ENCODE measurements at regions of chr2 and their contacts with region 1.

Region 1: GRCh38 chr2:178414266-178415247 is 36.4 kb downstream of the PRKRA start:
- DNase-seq: peak; percentile 87
- H3K4me3 ChIP-seq: peak overlapping the region; percentile 63 to 69 (median 68)
- H3K27ac ChIP-seq: peak overlapping the region; percentile 73
- H3K4me1 ChIP-seq: peaks cover 24% of the 10 kb centered on the region
- H3K27me3 ChIP-seq: no peaks in the 10 kb centered on the region
- CTCF ChIP-seq: peak; percentile 87 to 96

Region 2: GRCh38 chr2:177983183-177983788 is 431.3 kb before region 1 on chr2:
- CTCF ChIA-PET with region 1: no interaction called
- dilution Hi-C with region 1: no loop called
- in situ Hi-C with region 1: no loop called
- intact Hi-C with region 1: loop called (anchors 5 kb)
- DNase-seq: peak; percentile 36
- H3K4me3 ChIP-seq: no peak overlapping the region
- H3K27ac ChIP-seq: no peak overlapping the region
- H3K4me1 ChIP-seq: no peaks in the 10 kb centered on the region
- H3K27me3 ChIP-seq: peaks cover 4% of the 10 kb centered on the region
- CTCF ChIP-seq: peak; percentile 95 to 96

Region 3: DNA sequence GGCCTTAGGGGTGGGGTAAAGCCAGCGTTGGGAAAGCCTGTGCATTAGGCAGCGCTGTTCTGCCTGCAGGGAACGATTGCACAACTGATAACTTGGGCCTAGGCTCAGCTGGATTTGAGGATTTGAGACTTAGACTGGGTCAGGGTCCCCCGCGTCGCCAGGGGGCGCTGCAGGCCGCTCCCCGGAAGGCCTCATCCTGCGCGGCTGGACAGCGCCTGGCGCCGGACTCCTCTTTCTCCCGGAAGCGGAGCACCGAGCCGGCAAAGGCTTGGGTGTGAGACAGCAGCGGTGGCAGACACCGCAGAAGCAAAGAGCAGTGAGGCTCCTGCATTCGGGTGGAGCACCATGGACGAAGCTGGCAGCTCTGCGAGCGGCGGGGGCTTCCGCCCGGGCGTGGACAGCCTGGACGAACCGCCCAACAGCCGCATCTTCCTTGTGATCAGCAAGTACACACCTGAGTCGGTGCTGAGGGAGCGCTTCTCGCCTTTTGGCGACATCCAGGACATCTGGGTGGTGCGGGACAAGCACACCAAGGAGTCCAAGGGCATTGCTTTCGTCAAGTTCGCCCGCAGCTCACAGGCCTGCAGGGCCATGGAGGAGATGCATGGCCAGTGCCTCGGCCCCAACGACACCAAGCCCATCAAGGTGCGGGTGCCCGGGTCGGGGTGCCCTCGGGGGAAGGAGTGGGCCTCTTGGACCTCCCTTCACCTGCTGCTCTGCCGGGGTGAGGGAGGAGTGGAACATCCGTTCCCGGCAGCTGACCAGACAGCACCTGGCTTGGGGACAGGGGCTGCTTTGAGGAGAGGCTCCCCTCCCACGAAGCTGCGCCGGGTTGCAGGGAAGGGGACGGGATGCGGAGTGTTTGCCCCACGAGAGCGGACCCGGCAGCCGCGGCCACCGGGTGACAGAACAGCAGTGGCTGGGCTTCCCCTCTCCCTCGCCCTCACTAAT is 302.1 kb before region 1 on chr2 and contains the start of gene RBM45:
- CTCF ChIA-PET with region 1: interaction called, 3 read pairs
- dilution Hi-C with region 1: loop called (anchors 25 kb)
- in situ Hi-C with region 1: loop called in 1 of 2 experiments (anchors 10 kb)
- intact Hi-C with region 1: loop called (anchors 1 kb)
- DNase-seq: peak; percentile 95
- H3K4me3 ChIP-seq: peak within 1 kb of the TSS; percentile 74 to 85 (median 75)
- H3K27ac ChIP-seq: peak within 1 kb of the TSS; percentile 22
- H3K4me1 ChIP-seq: peaks cover 17% of the 10 kb centered on the region
- H3K27me3 ChIP-seq: no peaks in the 10 kb centered on the region
- CTCF ChIP-seq: peak; percentile 94 to 100
- total RNA-seq, gene RBM45: 12.1 to 15.5 TPM

Region 4: DNA sequence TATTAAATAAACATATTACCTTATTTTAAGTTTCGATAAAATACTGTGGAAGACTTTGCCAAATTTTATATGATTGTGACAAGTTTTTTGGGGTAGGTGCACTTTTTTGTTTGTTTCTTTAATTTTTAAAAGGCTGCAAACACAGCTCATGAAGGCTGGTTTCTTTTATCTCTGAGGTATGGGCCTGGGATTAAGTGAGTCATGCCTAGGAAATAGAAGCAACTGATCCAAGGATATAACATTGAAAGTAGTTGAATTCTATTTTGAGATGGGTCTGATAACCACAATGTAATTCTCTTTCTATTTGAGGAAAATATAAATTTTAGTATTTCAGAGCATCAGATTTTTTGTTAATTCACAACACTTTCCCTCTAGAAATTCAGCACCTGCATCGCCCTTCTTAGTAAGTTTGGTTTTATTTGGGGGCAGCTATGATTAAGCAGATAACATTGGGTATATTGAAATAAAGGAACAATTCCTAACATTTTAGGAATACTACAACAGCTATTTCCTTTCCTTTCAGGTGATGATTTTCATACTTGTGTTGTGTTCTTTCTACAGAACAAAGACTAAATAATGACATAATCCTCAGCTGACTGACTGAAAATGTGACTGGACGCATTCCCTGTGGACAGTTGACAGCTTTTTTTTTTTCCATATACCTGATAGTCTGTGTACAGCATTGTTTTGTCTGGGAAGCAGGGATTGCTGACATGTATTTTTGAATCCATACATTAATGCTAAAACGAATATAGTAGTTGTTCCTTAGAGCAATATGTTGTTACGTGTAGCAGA is 285.5 kb before region 1 on chr2:
- CTCF ChIA-PET with region 1: interaction called, 14 read pairs
- dilution Hi-C with region 1: loop called (anchors 25 kb)
- in situ Hi-C with region 1: no loop called
- intact Hi-C with region 1: loop called (anchors 1 kb)
- DNase-seq: no peak
- H3K4me3 ChIP-seq: no peak overlapping the region
- H3K27ac ChIP-seq: no peak overlapping the region
- H3K4me1 ChIP-seq: no peaks in the 10 kb centered on the region
- H3K27me3 ChIP-seq: no peaks in the 10 kb centered on the region
- CTCF ChIP-seq: no peak

Region 5: GRCh38 chr2:178193823-178194599 is 220.5 kb before region 1 on chr2 and contains the start of gene OSBPL6:
- CTCF ChIA-PET with region 1: no interaction called
- dilution Hi-C with region 1: no loop called
- in situ Hi-C with region 1: no loop called
- intact Hi-C with region 1: loop called (anchors 1 kb)
- DNase-seq: peak; percentile 91
- H3K4me3 ChIP-seq: peak within 1 kb of the TSS; percentile 78 to 87 (median 79)
- H3K27ac ChIP-seq: peak within 1 kb of the TSS; percentile 68
- H3K4me1 ChIP-seq: peaks cover 26% of the 10 kb centered on the region
- H3K27me3 ChIP-seq: no peaks in the 10 kb centered on the region
- CTCF ChIP-seq: peak in 1 of 2 donors; percentile 11
- total RNA-seq, gene OSBPL6: 32.2 to 32.9 TPM

Region 6: DNA sequence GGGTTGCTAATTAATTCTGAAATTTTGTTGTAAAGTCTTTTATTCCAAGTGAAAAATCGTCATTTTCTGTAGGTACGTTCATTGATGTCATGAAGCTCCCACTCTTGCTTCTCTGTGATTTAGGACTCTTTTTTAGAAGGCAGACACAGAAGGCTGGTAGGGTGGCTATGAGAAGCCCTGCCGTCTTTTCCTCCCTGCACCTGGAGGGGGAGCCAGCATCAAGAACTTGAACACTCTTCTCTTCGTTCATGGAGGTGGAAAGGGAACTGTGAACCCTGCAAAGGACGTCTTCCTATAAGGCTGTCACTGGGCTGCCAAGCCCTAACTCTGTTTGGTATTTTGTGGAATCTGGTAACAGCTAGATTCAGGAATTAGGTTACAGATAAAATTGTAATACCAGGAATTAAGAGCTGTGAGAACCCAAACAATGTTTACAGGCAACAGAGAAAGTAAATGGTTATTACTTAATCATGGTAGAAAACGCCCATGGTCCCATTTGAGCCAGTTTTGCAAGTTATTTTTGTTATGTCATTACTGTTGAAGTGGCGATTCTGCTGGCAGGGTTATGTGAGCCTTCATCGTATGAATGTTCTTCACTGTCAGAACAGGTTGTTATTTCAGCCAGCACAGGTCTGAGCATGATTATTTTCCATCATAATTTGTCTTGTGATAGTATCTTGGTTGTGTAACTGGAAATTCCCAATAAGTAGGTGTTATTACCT is 108.0 kb before region 1 on chr2:
- CTCF ChIA-PET with region 1: no interaction called
- dilution Hi-C with region 1: no loop called
- in situ Hi-C with region 1: no loop called
- intact Hi-C with region 1: loop called (anchors 1 kb)
- DNase-seq: peak; percentile 35
- H3K4me3 ChIP-seq: no peak overlapping the region
- H3K27ac ChIP-seq: no peak overlapping the region
- H3K4me1 ChIP-seq: peaks cover 4% of the 10 kb centered on the region
- H3K27me3 ChIP-seq: no peaks in the 10 kb centered on the region
- CTCF ChIP-seq: peak; percentile 48 to 77

Region 7: DNA sequence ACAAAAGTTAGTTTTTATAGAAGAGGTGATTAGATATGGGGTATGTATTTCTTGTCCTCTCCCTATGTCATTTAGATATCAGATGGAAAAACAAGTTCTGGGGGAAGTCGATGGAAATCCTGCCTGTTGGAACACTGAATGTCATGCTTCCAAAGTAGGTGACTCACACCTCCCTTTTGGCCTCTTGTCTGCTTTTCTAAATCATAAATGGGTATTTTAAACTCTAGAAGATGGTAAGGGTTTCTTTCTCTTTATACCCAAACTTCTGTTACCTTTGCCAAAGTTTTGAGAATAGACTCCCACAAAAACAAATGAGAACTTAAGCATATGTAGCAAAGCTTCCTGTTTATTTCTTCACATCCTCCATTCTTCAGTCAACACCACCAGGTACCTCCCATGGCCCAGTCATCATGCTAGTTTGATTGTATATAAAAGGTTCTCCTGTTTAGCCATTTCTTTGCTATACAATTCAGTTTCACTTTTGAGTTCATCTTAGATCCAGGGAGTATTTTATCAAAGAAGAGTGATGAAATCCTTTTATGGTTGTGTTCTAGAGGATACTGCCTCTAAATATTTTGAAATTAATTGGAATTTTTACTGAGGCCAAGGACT is 27.5 kb before region 1 on chr2:
- CTCF ChIA-PET with region 1: no interaction called
- dilution Hi-C with region 1: no loop called
- in situ Hi-C with region 1: no loop called
- intact Hi-C with region 1: no loop called
- DNase-seq: no peak
- H3K4me3 ChIP-seq: no peak overlapping the region
- H3K27ac ChIP-seq: no peak overlapping the region
- H3K4me1 ChIP-seq: no peaks in the 10 kb centered on the region
- H3K27me3 ChIP-seq: no peaks in the 10 kb centered on the region
- CTCF ChIP-seq: no peak

Region 8: GRCh38 chr2:178397002-178397605 is 17.5 kb before region 1 on chr2:
- CTCF ChIA-PET with region 1: interaction called, 7 read pairs
- dilution Hi-C with region 1: no loop called
- in situ Hi-C with region 1: no loop called
- intact Hi-C with region 1: loop called (anchors 1 kb)
- DNase-seq: peak; percentile 24
- H3K4me3 ChIP-seq: no peak overlapping the region
- H3K27ac ChIP-seq: no peak overlapping the region
- H3K4me1 ChIP-seq: no peaks in the 10 kb centered on the region
- H3K27me3 ChIP-seq: no peaks in the 10 kb centered on the region
- CTCF ChIP-seq: peak; percentile 54 to 72

Region 9: DNA sequence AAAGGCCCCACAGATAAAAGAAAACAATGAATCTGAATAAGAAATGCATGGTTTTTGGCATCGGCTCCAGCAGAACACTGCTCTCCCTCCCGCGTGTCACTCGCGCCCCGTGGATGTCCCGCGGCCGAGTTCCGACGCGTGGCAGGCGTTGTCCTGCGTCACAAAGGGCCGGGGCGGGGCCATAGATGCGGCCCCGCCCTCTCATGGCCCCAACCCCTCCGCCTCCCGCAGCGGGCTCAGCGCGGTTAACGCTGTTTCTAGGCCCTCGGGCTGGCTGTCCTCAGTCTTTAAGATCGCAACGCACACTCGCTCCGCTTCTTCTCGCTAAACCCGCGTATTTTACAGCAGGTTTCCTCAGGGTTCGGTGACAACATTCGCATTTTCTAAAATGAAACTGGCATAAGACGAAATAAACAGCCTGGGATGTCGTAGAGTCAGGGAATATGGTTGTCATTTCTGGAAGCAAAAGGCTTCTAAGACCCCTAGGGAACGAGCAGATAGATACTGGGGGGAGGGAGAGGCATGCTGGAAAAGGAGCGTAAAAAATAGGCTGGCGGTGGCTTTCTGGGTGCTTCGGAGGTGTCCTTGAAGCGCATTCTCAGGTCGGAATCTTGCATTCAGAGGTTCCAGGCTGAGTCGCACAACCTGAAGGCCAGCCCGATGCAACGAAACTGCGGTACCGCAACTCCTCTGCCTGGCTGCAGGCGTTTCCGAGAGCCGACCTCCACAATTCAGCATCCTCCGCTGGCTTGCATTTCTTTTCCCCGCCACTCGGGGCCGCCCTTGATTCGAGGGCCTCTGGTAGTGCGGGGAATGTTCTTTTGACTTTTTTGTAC is 64.1 kb after region 1 on chr2 and contains the start of gene FKBP7:
- CTCF ChIA-PET with region 1: no interaction called
- dilution Hi-C with region 1: no loop called
- in situ Hi-C with region 1: no loop called
- intact Hi-C with region 1: no loop called
- DNase-seq: peak; percentile 72
- H3K4me3 ChIP-seq: peak within 1 kb of the TSS; percentile 73 to 95 (median 88)
- H3K27ac ChIP-seq: peak within 1 kb of the TSS; percentile 91
- H3K4me1 ChIP-seq: peaks cover 25% of the 10 kb centered on the region
- H3K27me3 ChIP-seq: no peaks in the 10 kb centered on the region
- CTCF ChIP-seq: peak; percentile 75 to 77
- total RNA-seq, gene FKBP7: 1.6 to 2.3 TPM

Measured in mammary epithelial cell (primary cell).